Endothelial cell of umbilical vein (primary cell): ENCODE measurements at regions of chr20 and their contacts with region 1.

Region 1: DNA sequence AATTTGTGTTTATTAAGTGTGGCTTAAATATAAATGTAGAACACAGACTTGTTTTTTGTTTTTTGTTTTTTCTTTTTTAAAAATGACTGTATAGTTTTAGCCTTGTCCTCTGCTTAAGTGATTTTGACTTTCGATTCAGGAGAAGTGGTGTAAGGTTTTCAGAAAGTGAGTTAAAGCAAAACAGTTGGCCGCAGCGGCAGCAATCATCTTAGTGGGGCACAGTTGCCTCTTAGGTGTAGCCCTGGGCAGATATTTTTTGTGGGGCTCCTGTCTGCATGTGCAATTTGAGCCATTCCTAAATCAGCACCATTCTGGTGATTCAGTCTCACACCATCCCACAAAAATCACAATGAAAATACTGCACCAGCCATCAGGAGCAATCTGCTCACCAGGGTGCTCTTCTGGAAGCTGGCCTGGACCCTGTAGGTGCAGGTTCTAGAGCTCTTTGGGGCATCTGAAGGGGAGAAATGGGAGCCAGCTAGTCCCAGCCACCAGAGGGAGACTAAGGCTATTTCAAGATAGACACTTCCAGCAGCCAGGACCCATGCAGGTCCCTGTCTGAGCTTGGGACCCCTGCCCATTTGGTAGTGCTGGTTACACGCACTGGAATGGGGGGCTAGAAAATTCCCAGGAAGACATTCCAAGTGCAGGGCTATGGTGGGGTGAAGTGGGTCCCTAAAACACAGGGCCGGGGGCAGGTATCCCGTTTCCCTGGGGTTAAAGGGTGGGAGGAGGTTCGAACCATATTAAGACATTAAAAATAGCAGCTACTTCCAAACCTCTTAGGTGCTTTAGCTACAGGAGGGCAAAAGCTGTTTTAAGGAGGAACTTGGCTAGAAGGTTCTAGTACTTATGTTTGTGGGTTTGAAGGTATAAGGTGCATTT is 156.6 kb downstream of the NFATC2 start:
- DNase-seq: peak; percentile 67
- H3K4me3 ChIP-seq: no peak overlapping the region
- H3K27ac ChIP-seq: no peak overlapping the region
- H3K4me1 ChIP-seq: peaks cover 63% of the 10 kb centered on the region
- H3K27me3 ChIP-seq: no peaks in the 10 kb centered on the region
- CTCF ChIP-seq: peak; percentile 52 to 78
- POLR2A ChIP-seq: no peak

Region 2: GRCh38 chr20:51360451-51361221 is 25.3 kb before region 1 on chr20:
- CTCF ChIA-PET with region 1: interaction called, 3 read pairs
- POLR2A ChIA-PET with region 1: no interaction called
- dilution Hi-C with region 1: no loop called
- intact Hi-C with region 1: loop called (anchors 1 kb)
- DNase-seq: peak; percentile 98
- H3K4me3 ChIP-seq: no peak overlapping the region
- H3K27ac ChIP-seq: peak overlapping the region; percentile 85
- H3K4me1 ChIP-seq: peaks cover 33% of the 10 kb centered on the region
- H3K27me3 ChIP-seq: no peaks in the 10 kb centered on the region
- CTCF ChIP-seq: no peak
- POLR2A ChIP-seq: no peak

Region 3: GRCh38 chr20:51456511-51457509 is 70.9 kb after region 1 on chr20:
- CTCF ChIA-PET with region 1: interaction called, 19 read pairs
- POLR2A ChIA-PET with region 1: no interaction called
- dilution Hi-C with region 1: no loop called
- intact Hi-C with region 1: loop called (anchors 2 kb)
- DNase-seq: peak; percentile 99
- H3K4me3 ChIP-seq: no peak overlapping the region
- H3K27ac ChIP-seq: peak overlapping the region; percentile 71
- H3K4me1 ChIP-seq: peaks cover 15% of the 10 kb centered on the region
- H3K27me3 ChIP-seq: no peaks in the 10 kb centered on the region
- CTCF ChIP-seq: no peak
- POLR2A ChIP-seq: no peak

Region 4: DNA sequence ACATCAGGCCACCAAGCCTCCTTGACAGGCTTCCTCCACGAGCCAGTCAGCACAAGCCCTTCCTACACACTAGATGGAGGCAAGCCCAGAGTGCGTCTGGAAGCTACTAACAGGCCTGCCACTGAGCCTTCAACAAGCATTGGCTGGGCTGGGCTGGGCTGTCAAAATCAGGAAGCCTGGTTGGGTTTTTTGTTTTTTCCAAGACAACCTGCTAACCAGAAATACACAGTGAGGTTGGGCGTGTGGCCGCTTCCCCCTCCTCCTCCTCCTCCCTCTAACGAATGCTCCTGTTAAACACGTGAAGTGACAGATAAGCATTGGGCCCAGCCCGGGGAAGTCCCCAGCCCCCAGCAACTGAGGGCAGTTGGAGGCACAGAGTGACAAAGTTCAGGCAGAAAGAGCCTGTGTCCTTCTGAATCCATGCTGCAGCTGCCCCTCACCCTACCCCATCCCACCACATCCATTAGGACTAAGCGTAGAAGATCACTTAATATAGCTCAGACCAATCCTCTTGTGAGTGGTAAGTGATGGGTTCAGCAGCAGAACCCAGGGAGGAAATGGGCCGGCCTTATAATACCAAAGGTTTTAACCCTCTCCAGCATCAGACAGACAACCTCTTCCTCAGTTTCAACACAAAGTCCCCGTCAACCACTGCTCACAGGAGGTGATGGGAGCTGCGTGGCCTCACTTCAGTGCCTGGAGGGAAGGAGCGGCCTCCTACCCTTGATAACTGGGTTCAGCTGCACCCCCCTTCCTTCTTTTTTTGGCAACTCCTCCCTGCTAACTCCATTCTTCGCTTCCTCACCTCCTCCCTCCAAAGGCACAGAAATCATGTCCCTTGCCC is 155.5 kb after region 1 on chr20:
- CTCF ChIA-PET with region 1: interaction called, 19 read pairs
- POLR2A ChIA-PET with region 1: no interaction called
- dilution Hi-C with region 1: no loop called
- intact Hi-C with region 1: loop called (anchors 1 kb)
- DNase-seq: peak; percentile 85
- H3K4me3 ChIP-seq: peak overlapping the region in 2 of 3 experiments; percentile 36 to 47
- H3K27ac ChIP-seq: peak overlapping the region; percentile 42
- H3K4me1 ChIP-seq: peaks cover 25% of the 10 kb centered on the region
- H3K27me3 ChIP-seq: no peaks in the 10 kb centered on the region
- CTCF ChIP-seq: no peak
- POLR2A ChIP-seq: no peak

Region 5: DNA sequence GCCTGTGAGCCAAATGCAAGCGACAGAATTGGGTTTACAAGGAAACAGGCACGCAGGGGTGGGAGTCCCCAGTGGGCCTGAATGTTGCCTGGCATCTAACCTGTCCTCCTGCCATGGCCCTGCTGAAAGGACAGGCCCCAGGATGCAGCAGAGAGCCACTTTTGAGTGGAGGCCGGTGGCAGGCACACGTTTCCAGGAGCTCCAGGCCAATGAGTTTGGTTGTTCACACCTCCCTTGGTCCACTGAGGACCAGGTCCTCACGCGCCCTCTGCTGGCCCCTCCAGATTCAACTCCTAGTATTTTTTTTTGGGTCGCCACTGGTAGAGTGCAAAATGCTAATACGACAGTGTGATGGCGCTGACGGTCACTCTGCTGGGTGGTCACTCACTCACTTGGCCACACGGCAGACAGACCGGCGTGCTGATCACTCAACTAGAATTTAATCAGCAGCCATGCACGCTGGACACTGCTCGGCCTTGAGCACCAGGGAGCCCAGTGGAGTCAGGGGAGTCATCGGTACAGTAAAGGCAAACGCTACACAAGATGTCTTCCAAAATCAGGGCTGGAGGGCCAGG is 238.4 kb after region 1 on chr20:
- CTCF ChIA-PET with region 1: interaction called, 25 read pairs
- POLR2A ChIA-PET with region 1: no interaction called
- dilution Hi-C with region 1: no loop called
- intact Hi-C with region 1: no loop called
- DNase-seq: peak; percentile 81
- H3K4me3 ChIP-seq: no peak overlapping the region
- H3K27ac ChIP-seq: peak overlapping the region; percentile 41
- H3K4me1 ChIP-seq: peaks cover 14% of the 10 kb centered on the region
- H3K27me3 ChIP-seq: no peaks in the 10 kb centered on the region
- CTCF ChIP-seq: peak; percentile 82 to 84
- POLR2A ChIP-seq: no peak

Region 6: GRCh38 chr20:51695574-51696303 is 309.9 kb after region 1 on chr20:
- CTCF ChIA-PET with region 1: no interaction called
- POLR2A ChIA-PET with region 1: no interaction called
- dilution Hi-C with region 1: no loop called
- intact Hi-C with region 1: no loop called
- DNase-seq: peak; percentile 96
- H3K4me3 ChIP-seq: peak overlapping the region in 1 of 3 experiments; percentile 8
- H3K27ac ChIP-seq: peak overlapping the region; percentile 98
- H3K4me1 ChIP-seq: peaks cover 31% of the 10 kb centered on the region
- H3K27me3 ChIP-seq: no peaks in the 10 kb centered on the region
- CTCF ChIP-seq: no peak
- POLR2A ChIP-seq: no peak